ENCODE measurements at regions of chr1 and their contacts with region 1.

Region 1: DNA sequence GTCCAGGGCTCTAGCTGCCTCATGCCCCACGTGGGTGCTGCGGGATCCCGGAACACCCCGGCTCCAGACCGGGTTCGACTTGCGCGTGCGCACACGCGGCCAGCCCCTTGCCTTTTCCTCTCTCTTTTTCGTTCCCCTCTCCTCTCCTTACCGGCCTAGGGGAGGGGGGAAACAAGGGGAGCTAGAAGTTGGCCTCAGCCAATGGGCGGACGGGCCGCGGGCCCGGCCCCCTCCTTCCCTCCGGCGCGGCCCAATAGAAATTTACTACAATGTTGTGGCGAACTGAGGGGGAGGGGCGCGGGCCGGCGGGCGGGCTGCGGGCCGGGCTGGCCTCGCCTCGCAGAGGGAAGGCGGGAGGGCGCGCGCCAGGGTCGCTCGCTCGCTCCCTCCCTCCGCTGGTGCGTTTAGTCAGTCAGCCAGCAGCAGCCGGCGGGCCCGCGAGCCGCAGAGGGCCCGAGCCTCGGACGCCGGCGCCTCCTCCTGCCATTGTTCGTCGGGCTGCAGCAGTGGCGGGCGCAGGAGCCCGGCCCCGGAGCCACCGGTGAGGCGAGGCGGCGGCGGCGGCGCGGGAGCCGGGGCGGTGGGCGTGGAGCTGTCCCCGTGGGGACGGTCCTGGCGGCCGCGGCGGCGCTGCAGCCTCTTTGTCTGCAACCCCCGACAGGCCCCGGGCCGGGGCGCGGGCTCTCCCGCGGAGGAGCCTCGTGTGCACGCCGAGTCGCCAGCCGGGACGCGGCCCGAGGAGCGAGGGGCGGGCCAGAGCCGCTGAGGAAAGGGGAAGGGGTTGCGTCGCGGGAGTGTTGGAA is at the start of gene EPB41:
- DNase-seq: peak; percentile 98
- H3K4me3 Mint-ChIP-seq: peak within 1 kb of the TSS; percentile 98
- H3K27ac Mint-ChIP-seq: peak within 1 kb of the TSS; percentile 97
- H3K4me1 Mint-ChIP-seq: peaks cover 43% of the 10 kb centered on the region
- H3K27me3 Mint-ChIP-seq: no peaks in the 10 kb centered on the region
- total RNA-seq, gene EPB41: 79.1 and 79.7 TPM in 2 replicates

Region 2: DNA sequence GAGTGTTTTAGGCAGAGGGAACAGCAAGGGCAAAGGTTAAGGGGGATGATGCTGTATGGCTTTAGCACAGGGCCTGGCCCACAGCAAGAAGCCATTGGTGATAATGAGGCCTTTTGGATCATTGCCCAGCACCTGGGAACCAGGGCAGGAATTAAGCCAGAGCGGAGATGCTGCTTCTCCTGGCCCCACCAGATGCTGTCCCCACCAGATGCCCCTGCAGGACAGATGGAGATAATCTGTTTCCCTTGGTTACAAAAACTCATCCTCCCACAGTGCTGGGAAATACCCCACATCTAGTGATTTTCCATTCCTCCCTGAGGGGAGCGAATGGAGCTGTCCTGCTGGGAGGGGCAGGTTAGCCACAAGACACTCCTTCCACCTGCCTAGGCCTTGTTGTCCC is 83.6 kb before region 1 on chr1:
- intact Hi-C with region 1: no loop called
- DNase-seq: no peak
- H3K4me3 Mint-ChIP-seq: no peak overlapping the region
- H3K27ac Mint-ChIP-seq: no peak overlapping the region
- H3K4me1 Mint-ChIP-seq: no peaks in the 10 kb centered on the region
- H3K27me3 Mint-ChIP-seq: peaks cover 6% of the 10 kb centered on the region

Region 3: GRCh38 chr1:28926629-28927265 is 12.3 kb after region 1 on chr1:
- intact Hi-C with region 1: loop called (anchors 1 kb)
- DNase-seq: peak; percentile 89
- H3K4me3 Mint-ChIP-seq: peak overlapping the region; percentile 73
- H3K27ac Mint-ChIP-seq: peak overlapping the region; percentile 89
- H3K4me1 Mint-ChIP-seq: peaks cover 41% of the 10 kb centered on the region
- H3K27me3 Mint-ChIP-seq: no peaks in the 10 kb centered on the region

Region 4: DNA sequence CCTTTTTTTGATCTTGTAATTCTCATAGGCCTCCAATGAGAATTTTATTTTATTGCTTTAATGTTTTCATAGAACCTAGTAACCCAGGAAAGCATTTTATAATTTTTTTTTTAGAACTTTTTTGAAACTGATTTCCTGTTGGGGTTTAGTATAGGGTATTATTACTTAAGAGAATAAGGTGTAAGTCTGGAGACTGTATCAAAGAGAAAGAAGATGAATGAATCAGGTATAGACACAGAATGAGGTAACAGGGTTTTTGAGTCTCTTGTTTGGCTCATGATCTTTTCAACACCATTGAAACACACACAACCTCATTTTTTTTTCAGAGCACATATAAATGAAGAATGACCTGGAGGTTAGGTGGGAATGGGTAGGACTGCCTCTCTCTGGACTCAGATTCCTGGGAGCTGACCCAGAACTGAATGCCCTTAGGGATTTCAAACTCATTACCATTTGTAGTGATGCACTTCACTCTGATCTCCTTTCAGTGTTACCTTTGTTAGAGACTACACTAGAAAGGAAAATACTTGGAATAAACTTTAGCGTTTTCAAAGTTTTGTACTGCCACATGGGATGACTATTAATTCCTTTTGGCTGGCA is 50.9 kb after region 1 on chr1:
- intact Hi-C with region 1: loop called (anchors 1 kb)
- DNase-seq: no peak
- H3K4me3 Mint-ChIP-seq: no peak overlapping the region
- H3K27ac Mint-ChIP-seq: no peak overlapping the region
- H3K4me1 Mint-ChIP-seq: peaks cover 30% of the 10 kb centered on the region
- H3K27me3 Mint-ChIP-seq: no peaks in the 10 kb centered on the region

Measured in activated CD4-positive, alpha-beta T cell treated with anti-CD3 and anti-CD28 coated beads, Interleukin-2, amount 10 ng/mL, durations not matched to agents 24 days and 14 days (primary cell).